Heart left ventricle (tissue), 16 donors: ENCODE measurements at regions of chr9 and their contacts with region 1.

Region 1: GRCh38 chr9:131068076-131068816 is 28.1 kb upstream of the AIF1L start:
- DNase-seq: peak in 2 of 5 donors; percentile 44 to 46
- ATAC-seq: peak; percentile 58 to 76 (median 59)
- H3K4me3 ChIP-seq: no peak overlapping the region
- H3K27ac ChIP-seq: no peak overlapping the region
- H3K4me1 ChIP-seq: peaks cover 0 to 10% (median 0%) of the 10 kb centered on the region in 12 donors
- H3K27me3 ChIP-seq: no peaks in the 10 kb centered on the region
- CTCF ChIP-seq: no peak
- POLR2A ChIP-seq: no peak

Region 2: DNA sequence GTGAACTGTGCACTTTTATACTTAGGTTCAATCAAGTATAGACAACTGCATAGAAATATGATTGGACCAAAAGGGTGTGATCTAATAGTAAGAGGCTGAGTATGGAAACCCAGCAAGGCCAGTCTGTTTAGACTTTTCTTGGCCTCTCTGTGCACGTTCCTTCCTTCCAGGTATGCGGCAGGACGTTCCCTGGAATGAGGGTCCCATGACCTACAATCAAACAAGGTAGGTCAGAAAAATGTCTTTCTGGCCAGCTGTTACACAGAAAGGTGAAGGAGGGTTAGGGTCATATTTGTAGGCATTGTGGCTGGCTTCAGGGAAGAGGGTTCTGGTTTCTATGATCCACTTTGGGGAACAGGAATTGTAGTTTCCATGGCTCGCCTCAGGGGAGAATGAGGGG is 1532.2 kb before region 1 on chr9:
- intact Hi-C with region 1: no loop called
- DNase-seq: no peak
- ATAC-seq: no peak
- H3K4me3 ChIP-seq: no peak overlapping the region
- H3K27ac ChIP-seq: no peak overlapping the region
- H3K4me1 ChIP-seq: no peaks in the 10 kb centered on the region
- H3K27me3 ChIP-seq: no peaks in the 10 kb centered on the region
- CTCF ChIP-seq: no peak
- POLR2A ChIP-seq: no peak

Region 3: GRCh38 chr9:131125128-131126058 is 57.1 kb after region 1 on chr9 and contains the start of gene NUP214:
- intact Hi-C with region 1: loop called in 1 of 10 experiments (anchors 5 kb)
- DNase-seq: peak; percentile 99 to 100 (median 99)
- ATAC-seq: peak; percentile 99 to 100 (median 99)
- H3K4me3 ChIP-seq: peak within 1 kb of the TSS; percentile 55 to 99 (median 87)
- H3K27ac ChIP-seq: peak within 1 kb of the TSS; percentile 59 to 91 (median 80)
- H3K4me1 ChIP-seq: peaks cover 0 to 22% (median 15%) of the 10 kb centered on the region in 12 donors
- H3K27me3 ChIP-seq: no peaks in the 10 kb centered on the region
- CTCF ChIP-seq: no peak
- POLR2A ChIP-seq: peak in 1 of 2 donors; percentile 85
- total RNA-seq, gene NUP214: 19.2 to 45.1 (median 25.7) TPM